Esophagus muscularis mucosa (tissue), 4 donors: ENCODE measurements at regions of chr9 and their contacts with region 1.

Region 1: GRCh38 chr9:36924071-36924470 is 110.0 kb downstream of the PAX5 start:
- DNase-seq: no peak
- H3K4me3 ChIP-seq: no peak overlapping the region
- H3K27ac ChIP-seq: no peak overlapping the region
- H3K4me1 ChIP-seq: no peaks in the 10 kb centered on the region
- H3K27me3 ChIP-seq: peaks cover 0 to 23% (median 0%) of the 10 kb centered on the region in 4 donors
- CTCF ChIP-seq: no peak
- EP300 ChIP-seq: no peak
- POLR2A ChIP-seq: no peak

Region 2: GRCh38 chr9:36995927-36996705 is 72.0 kb after region 1 on chr9:
- intact Hi-C with region 1: loop called (anchors 10 kb)
- DNase-seq: no peak
- H3K4me3 ChIP-seq: no peak overlapping the region
- H3K27ac ChIP-seq: no peak overlapping the region
- H3K4me1 ChIP-seq: peaks cover 0 to 3% (median 0%) of the 10 kb centered on the region in 4 donors
- H3K27me3 ChIP-seq: peaks cover 0 to 81% (median 9%) of the 10 kb centered on the region in 4 donors
- CTCF ChIP-seq: peak in 2 of 3 experiments; percentile 4 to 26
- EP300 ChIP-seq: no peak
- POLR2A ChIP-seq: no peak